ENCODE measurements at regions of chr2 and their contacts with region 1.

Region 1: DNA sequence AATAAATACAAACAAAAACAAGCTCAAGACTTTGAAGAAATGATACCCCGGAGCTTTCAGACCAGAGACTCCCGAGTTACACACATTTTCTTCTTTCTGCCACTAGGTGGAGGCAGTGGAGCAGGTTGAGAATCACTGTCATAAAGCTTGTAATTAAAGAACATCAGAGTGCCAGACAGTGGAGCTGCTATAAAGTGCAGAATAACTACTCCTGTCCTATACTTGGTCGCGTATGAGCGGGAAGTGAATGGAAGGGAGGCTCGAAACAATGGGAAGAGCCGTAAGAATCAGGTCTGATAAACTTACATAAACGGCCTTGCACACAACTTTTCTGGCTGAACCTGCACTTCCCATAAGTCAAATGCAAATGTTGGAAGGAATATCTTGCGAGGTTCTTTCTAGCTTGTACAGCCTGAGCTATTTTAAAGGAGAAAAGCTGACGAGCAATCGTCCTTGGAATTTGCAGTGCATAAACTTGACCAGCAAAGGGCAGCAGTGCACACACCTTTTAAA is 189.0 kb downstream of the RPIA start:
- DNase-seq: no peak
- CTCF ChIP-seq: peak; percentile 28

Region 2: DNA sequence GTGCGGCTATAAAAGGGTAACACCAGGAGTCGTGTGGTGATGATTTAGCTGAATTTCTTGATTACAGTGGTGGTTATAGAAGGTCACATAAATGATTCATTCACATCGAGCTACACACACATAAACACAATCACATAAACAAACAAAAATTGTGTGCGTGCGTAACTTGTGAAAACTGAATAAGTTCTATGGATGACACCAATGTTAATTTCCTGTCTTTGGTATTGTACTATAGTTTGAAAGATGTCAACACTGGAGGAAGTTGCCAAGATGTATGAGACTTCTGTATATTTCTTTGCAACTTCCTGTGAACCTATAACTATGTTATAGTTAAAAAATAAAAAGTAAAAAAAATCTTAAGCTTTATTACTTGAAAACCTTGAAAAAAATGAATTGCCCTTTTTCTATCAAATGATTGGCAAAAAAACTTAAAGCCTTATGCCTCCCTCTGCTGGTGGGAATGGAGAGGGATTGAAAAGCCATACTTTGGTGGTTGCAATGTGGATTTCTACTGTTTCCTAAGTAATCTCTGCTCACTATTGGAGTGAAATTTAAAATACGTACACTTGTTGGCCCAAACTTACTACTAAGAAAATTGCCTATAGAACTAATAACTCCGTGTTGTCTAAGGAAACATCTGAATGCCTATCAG is 38.7 kb after region 1 on chr2:
- CTCF ChIA-PET with region 1: interaction called, 12 read pairs
- POLR2A ChIA-PET with region 1: no interaction called
- DNase-seq: no peak
- CTCF ChIP-seq: peak; percentile 19

Measured in GM10248 (cell line).